Endothelial cell of umbilical vein (primary cell): ENCODE measurements at regions of chr1 and their contacts with region 1.

Region 1: GRCh38 chr1:41496080-41497055 is 11.9 kb upstream of the EDN2 start:
- DNase-seq: peak; percentile 60
- H3K4me3 ChIP-seq: peak overlapping the region in 2 of 3 experiments; percentile 12 to 27
- H3K27ac ChIP-seq: peak overlapping the region; percentile 88
- H3K4me1 ChIP-seq: peaks cover 22% of the 10 kb centered on the region
- H3K27me3 ChIP-seq: no peaks in the 10 kb centered on the region
- CTCF ChIP-seq: no peak
- POLR2A ChIP-seq: no peak

Region 2: DNA sequence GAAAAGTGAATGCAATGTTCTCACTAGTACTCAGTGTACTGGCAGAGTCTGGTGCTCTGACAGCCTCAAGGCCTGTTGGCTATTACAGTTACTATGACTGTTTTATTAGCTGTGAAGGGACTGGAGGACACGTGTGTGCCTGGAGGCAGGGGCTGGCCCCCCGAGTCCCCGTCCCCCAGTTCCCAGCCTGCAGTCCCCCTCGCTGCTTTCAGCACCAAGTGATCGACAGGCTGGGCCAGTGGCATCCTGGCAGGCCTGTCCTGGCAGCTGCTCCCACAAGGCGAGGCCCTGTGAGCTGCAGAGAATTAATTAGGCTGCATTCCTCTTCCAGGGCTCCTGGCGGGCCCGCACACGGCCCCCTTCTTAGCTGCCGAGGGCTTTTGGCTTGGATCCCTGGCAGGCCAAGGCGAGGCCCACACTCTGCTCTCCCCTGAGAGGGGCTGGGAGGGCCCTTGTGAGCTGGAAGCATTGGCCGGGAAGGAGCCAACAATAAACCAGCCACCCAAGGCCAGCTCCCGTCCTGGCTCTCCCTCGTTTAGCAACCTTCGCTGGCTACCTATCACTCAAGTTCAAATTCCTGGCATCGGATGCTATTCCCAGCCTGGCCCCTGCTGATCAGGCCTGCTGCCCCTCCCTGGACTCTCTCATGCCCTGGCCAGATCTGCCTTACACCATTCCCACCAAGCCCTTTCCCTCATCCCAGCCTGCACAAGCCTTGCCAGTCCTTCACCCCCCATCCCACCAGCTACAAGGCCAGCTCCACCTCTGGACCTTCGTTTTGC is 21.7 kb before region 1 on chr1:
- CTCF ChIA-PET with region 1: interaction called, 16 read pairs
- POLR2A ChIA-PET with region 1: no interaction called
- dilution Hi-C with region 1: no loop called
- intact Hi-C with region 1: no loop called
- DNase-seq: no peak
- H3K4me3 ChIP-seq: no peak overlapping the region
- H3K27ac ChIP-seq: no peak overlapping the region
- H3K4me1 ChIP-seq: no peaks in the 10 kb centered on the region
- H3K27me3 ChIP-seq: no peaks in the 10 kb centered on the region
- CTCF ChIP-seq: no peak
- POLR2A ChIP-seq: no peak

Region 3: GRCh38 chr1:41484372-41485241 is 11.8 kb before region 1 on chr1 and contains the start of gene EDN2:
- CTCF ChIA-PET with region 1: interaction called, 13 read pairs
- POLR2A ChIA-PET with region 1: no interaction called
- dilution Hi-C with region 1: no loop called
- intact Hi-C with region 1: loop called (anchors 1 kb)
- DNase-seq: no peak
- H3K4me3 ChIP-seq: no peak within 1 kb of the TSS
- H3K27ac ChIP-seq: no peak within 1 kb of the TSS
- H3K4me1 ChIP-seq: peaks cover 17% of the 10 kb centered on the region
- H3K27me3 ChIP-seq: peaks cover 0 to 4% of the 10 kb centered on the region in 2 experiments
- CTCF ChIP-seq: peak in 1 of 2 donors; percentile 6
- POLR2A ChIP-seq: no peak
- total RNA-seq, gene EDN2: not detected in 2 replicates